ENCODE measurements at regions of chr11 and their contacts with region 1.

Region 1: DNA sequence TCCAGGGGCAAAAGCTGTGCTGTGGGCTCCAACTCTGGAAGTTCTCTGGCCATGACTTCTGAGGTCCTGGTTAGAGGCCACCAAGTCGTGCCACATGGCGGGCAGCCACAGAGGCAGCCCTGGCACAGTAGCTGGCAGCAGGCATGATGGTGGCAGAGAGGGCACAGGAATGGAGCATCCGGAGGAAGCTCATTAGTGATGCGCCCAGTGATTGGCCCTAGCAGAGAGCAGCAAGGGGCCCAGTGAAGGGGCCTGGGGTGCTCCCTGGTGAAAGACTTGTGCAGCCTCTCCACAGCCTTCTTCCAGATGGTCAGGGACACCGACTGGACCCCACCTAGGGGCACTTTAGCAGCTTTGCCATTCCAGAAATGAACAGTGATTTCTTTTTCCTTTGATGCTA is 7.0 kb downstream of the C11orf16 start:
- DNase-seq: no peak
- H3K4me3 ChIP-seq: no peak overlapping the region
- H3K27ac ChIP-seq: no peak overlapping the region
- H3K4me1 ChIP-seq: no peaks in the 10 kb centered on the region
- H3K27me3 ChIP-seq: no peaks in the 10 kb centered on the region
- CTCF ChIP-seq: no peak

Region 2: DNA sequence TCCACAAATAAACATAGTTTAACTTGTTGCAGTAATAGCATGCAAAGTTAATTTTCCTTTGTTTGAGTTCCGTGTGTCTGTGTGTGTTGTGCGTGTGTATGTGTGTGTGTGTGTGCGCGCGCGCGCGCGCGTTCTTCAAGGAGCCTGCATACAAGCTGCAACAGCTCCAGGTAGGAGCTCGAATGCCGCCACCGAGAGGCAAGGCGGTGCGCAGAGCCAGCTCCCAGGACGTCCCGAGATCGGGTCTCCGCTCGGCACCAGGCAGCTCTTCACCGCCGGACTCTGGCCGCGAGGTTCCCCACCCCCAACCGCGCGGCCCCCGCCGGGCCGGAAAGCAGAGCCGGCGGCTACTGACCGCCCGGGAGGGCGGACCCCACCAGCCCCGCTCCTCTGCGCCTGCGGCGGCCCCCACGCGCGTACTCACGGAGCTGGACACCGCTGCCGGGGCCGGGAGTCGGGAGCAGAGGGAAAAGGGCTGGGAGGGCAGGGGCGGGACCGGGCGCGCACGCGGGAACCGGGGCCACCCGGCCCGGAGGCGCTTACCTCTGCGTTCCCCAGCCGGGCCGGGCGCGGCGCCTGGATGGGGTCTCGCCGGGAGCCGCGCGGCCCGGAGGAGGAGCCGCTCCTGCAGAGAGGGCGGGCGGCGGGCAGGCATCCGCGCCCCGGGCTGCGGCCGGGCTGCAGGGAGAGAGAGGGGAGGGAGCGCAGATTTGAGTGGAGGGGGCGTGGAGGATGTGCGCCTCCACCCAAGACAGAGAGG is 55.1 kb before region 1 on chr11:
- CTCF ChIA-PET with region 1: no interaction called
- POLR2A ChIA-PET with region 1: interaction called, 10 read pairs
- intact Hi-C with region 1: no loop called
- DNase-seq: peak; percentile 72
- H3K4me3 ChIP-seq: peak overlapping the region; percentile 82
- H3K27ac ChIP-seq: peak overlapping the region; percentile 69
- H3K4me1 ChIP-seq: peaks cover 16% of the 10 kb centered on the region
- H3K27me3 ChIP-seq: no peaks in the 10 kb centered on the region
- CTCF ChIP-seq: no peak

Region 3: GRCh38 chr11:9180784-9181183 is 255.1 kb after region 1 on chr11:
- CTCF ChIA-PET with region 1: interaction called, 10 read pairs
- POLR2A ChIA-PET with region 1: no interaction called
- intact Hi-C with region 1: no loop called
- DNase-seq: no peak
- H3K4me3 ChIP-seq: no peak overlapping the region
- H3K27ac ChIP-seq: no peak overlapping the region
- H3K4me1 ChIP-seq: no peaks in the 10 kb centered on the region
- H3K27me3 ChIP-seq: no peaks in the 10 kb centered on the region
- CTCF ChIP-seq: no peak